Transverse colon (tissue), 4 donors: ENCODE measurements at regions of chr2 and their contacts with region 1.

Region 1: GRCh38 chr2:175282290-175282689 is 100.8 kb upstream of the ATP5MC3 start:
- DNase-seq: no peak
- H3K4me3 ChIP-seq: no peak overlapping the region
- H3K27ac ChIP-seq: no peak overlapping the region
- H3K4me1 ChIP-seq: no peaks in the 10 kb centered on the region
- H3K27me3 ChIP-seq: no peaks in the 10 kb centered on the region
- CTCF ChIP-seq: peak; percentile 34 to 54 (median 49)
- EP300 ChIP-seq: no peak
- POLR2A ChIP-seq: no peak

Region 2: GRCh38 chr2:175111200-175111657 is 171.1 kb before region 1 on chr2:
- in situ Hi-C with region 1: loop called in 3 of 4 experiments (anchors 25 kb)
- intact Hi-C with region 1: loop called (anchors 5 kb)
- DNase-seq: no peak
- H3K4me3 ChIP-seq: no peak overlapping the region
- H3K27ac ChIP-seq: no peak overlapping the region
- H3K4me1 ChIP-seq: no peaks in the 10 kb centered on the region
- H3K27me3 ChIP-seq: no peaks in the 10 kb centered on the region
- CTCF ChIP-seq: peak; percentile 66 to 77 (median 76)
- EP300 ChIP-seq: no peak
- POLR2A ChIP-seq: no peak